ENCODE measurements at regions of chr6 and their contacts with region 1.

Region 1: GRCh38 chr6:67908377-67908776 is 726.7 kb upstream of the ADGRB3 start:
- DNase-seq: no peak
- H3K4me3 ChIP-seq: no peak overlapping the region
- H3K27ac ChIP-seq: no peak overlapping the region
- H3K4me1 ChIP-seq: no peaks in the 10 kb centered on the region
- H3K27me3 ChIP-seq: no peaks in the 10 kb centered on the region
- CTCF ChIP-seq: no peak

Region 2: DNA sequence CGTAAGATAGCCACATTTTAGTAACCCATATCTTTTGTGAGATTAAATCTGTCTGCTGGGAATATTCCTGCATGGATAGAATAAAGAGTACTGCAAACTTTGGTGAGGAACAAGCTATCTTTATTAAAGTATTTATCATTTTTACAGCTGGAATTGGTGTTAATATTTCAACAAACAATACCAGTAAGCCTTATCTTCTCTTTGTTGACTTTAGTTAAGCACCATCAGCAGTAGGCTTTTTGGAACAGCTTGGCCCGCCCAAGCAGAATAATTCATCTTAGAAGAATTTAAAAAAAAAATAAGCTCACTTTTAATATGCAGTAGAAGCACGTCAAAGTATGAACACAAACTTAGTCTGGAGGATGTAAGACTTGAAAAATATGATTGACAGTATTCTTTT is 191.1 kb before region 1 on chr6:
- CTCF ChIA-PET with region 1: interaction called, 10 read pairs
- POLR2A ChIA-PET with region 1: no interaction called
- intact Hi-C with region 1: no loop called
- DNase-seq: no peak
- H3K4me3 ChIP-seq: no peak overlapping the region
- H3K27ac ChIP-seq: no peak overlapping the region
- H3K4me1 ChIP-seq: no peaks in the 10 kb centered on the region
- H3K27me3 ChIP-seq: no peaks in the 10 kb centered on the region
- CTCF ChIP-seq: no peak

Region 3: GRCh38 chr6:67888886-67889681 is 19.3 kb before region 1 on chr6:
- CTCF ChIA-PET with region 1: no interaction called
- POLR2A ChIA-PET with region 1: no interaction called
- intact Hi-C with region 1: no loop called
- DNase-seq: no peak
- H3K4me3 ChIP-seq: no peak overlapping the region
- H3K27ac ChIP-seq: no peak overlapping the region
- H3K4me1 ChIP-seq: no peaks in the 10 kb centered on the region
- H3K27me3 ChIP-seq: no peaks in the 10 kb centered on the region
- CTCF ChIP-seq: no peak

Measured in A673 (cell line).